ENCODE measurements at regions of chr10 and their contacts with region 1.

Region 1: DNA sequence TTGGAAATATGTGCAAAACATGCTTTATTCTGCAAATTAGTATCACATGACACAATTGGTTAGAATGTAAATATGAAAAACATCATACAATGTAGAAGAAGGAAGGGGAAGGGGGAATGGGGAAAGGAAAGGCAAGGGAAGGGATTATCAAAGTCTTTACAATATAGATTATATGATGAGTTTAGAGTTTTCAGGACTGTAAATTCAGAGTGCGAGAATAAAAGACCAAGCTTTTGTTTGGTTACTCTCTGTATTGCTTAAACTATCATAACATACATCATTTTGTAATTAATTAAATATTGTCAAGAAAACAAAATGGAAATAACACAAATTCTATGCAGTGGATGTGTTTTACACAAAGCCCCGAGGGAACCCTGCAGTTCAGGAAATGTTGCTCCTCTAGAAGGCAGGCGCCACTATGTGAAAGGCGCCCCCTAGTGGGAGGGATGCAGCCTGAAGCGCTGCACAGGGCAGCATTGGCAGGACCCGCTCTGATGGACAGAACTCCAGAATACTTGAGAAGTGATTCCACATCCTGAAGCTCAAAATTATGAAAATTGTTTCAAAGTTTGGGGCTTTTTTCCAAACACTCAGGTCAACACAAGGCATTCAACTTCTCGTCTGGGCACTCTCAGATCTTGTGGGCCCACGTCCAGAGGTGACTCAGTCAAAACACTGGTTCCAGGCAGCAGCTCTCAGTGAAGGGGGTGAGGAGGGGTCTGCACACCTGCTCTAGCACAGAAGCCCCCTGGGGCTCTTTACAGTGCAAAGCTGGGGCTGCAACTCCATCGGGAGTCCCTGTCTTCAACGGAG is 31.6 kb upstream of the TMEM254 start:
- DNase-seq: peak; percentile 56 to 93 (median 80)
- ATAC-seq: peak; percentile 92 to 99 (median 96)
- H3K4me3 ChIP-seq: no peak overlapping the region
- H3K27ac ChIP-seq: no peak overlapping the region
- H3K4me1 ChIP-seq: no peaks in the 10 kb centered on the region
- H3K27me3 ChIP-seq: no peaks in the 10 kb centered on the region
- CTCF ChIP-seq: peak; percentile 81 to 95 (median 94)

Region 2: DNA sequence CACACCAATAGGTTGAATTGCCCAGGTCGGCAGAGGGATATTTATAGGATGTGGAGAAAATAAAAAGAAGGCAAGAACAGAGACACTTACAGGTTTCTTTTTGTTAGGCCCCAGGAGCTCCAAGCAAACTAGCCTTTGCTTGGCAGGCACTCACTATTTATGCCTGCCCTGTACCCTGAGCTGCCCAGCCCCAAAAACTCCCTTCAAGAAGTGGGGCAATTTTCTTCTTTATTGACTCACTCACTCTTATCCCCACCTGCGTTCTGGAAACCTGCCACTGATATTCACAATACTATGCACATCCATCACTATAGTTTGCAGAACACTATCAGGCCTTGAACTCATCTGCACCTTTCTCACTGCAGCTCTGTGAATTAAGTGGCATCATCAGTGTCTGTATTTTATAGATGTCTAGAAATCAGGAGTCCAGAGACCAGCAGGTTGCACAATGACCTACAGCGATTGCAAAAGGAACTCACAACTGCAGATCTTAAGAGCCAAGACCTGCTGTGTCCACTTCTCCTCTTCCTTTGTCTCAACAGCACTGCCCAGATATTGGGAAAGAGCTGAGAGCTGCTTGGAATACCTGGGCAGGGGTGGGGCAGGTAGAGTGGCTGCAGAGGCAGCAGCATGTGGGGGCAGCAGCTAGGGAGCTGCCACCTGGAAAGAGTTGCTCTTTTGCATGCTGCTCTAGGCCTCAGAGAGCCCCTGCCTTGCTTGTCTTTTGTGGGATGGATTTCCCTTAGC is 97.7 kb before region 1 on chr10 and contains the start of gene SFTPD:
- intact Hi-C with region 1: loop called in 1 of 3 experiments (anchors 10 kb)
- DNase-seq: no peak
- ATAC-seq: no peak
- H3K4me3 ChIP-seq: no peak within 1 kb of the TSS
- H3K27ac ChIP-seq: no peak within 1 kb of the TSS
- H3K4me1 ChIP-seq: peaks cover 0 to 8% (median 0%) of the 10 kb centered on the region in 3 donors
- H3K27me3 ChIP-seq: no peaks in the 10 kb centered on the region
- CTCF ChIP-seq: no peak
- total RNA-seq, gene SFTPD: 1.5 to 3.2 (median 2.1) TPM

Region 3: DNA sequence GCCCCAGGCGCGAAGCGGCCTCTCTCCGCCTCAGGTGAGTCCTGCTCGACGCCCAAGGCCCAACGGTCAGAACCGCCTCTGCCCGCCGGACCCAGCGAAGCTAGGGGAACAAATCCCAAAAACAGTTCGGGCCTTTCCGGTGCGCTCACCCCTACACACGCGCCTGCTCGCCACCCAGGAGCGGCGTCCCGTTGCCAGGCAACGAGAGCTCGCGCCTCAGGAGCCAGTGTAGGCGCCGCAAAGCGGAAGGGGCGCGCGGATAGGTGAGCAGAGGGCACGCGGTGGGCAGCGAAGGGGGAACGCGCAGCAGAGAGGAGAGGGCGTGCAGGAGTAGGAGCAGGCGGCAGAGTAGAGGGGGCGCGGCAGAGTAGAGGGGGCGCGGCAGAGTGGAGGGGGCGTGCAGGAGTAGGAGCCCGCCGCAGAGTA is 309.7 kb after region 1 on chr10 and contains the starts of genes DYDC1 and DYDC2:
- intact Hi-C with region 1: no loop called
- DNase-seq: peak; percentile 56 to 88 (median 70)
- ATAC-seq: peak; percentile 89 to 98 (median 96)
- H3K4me3 ChIP-seq: peak within 1 kb of the TSS; percentile 3 to 43 (median 26)
- H3K27ac ChIP-seq: no peak within 1 kb of the TSS
- H3K4me1 ChIP-seq: no peaks in the 10 kb centered on the region
- H3K27me3 ChIP-seq: no peaks in the 10 kb centered on the region
- CTCF ChIP-seq: no peak
- total RNA-seq, gene DYDC1: not detected
- total RNA-seq, gene DYDC2: 0.32 to 0.44 TPM in 2 of 6 donors, not detected in the others